ENCODE measurements at regions of chr6 and their contacts with region 1.

Region 1: GRCh38 chr6:87929843-87930288 is 117.8 kb upstream of the SPACA1 start:
- DNase-seq: peak; percentile 81 to 96 (median 89)
- H3K4me3 ChIP-seq: no peak overlapping the region
- H3K27ac ChIP-seq: no peak overlapping the region
- H3K4me1 ChIP-seq: no peaks in the 10 kb centered on the region
- H3K27me3 ChIP-seq: no peaks in the 10 kb centered on the region
- CTCF ChIP-seq: peak; percentile 68 to 97 (median 90)
- POLR2A ChIP-seq: no peak

Region 2: DNA sequence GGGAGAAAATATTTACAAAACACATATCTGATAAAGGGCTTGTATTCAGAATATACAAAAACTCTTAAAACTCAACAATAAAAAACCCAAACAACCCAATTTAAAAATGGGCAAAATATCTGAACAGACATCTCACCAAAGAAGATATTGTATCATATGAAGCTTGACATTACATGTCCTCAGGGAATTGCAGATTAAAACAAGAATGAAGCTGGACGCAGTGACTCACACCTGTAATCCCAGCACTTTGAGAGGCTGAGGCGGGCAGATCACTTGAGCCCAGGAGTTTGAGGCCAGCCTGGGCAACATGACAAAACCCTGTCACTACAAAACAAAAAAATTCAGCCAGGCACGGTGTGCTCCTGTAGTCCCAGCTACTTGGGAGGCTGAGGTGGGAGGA is 92.4 kb before region 1 on chr6:
- intact Hi-C with region 1: loop called in 1 of 2 experiments (anchors 5 kb)
- DNase-seq: no peak
- H3K4me3 ChIP-seq: no peak overlapping the region
- H3K27ac ChIP-seq: no peak overlapping the region
- H3K4me1 ChIP-seq: peaks cover 0 to 4% of the 10 kb centered on the region in 2 donors
- H3K27me3 ChIP-seq: no peaks in the 10 kb centered on the region
- CTCF ChIP-seq: no peak
- POLR2A ChIP-seq: no peak

Region 3: GRCh38 chr6:88492824-88493223 is 563.0 kb after region 1 on chr6:
- intact Hi-C with region 1: loop called (anchors 5 kb)
- DNase-seq: peak in 4 of 7 donors; percentile 17 to 40 (median 24)
- H3K4me3 ChIP-seq: no peak overlapping the region
- H3K27ac ChIP-seq: no peak overlapping the region
- H3K4me1 ChIP-seq: no peaks in the 10 kb centered on the region
- H3K27me3 ChIP-seq: no peaks in the 10 kb centered on the region
- CTCF ChIP-seq: peak; percentile 36 to 78 (median 62)
- POLR2A ChIP-seq: no peak

Region 4: GRCh38 chr6:88780714-88781389 is 851.0 kb after region 1 on chr6:
- intact Hi-C with region 1: loop called in 1 of 2 experiments (anchors 10 kb)
- DNase-seq: peak; percentile 41 to 73 (median 56)
- H3K4me3 ChIP-seq: no peak overlapping the region
- H3K27ac ChIP-seq: no peak overlapping the region
- H3K4me1 ChIP-seq: no peaks in the 10 kb centered on the region
- H3K27me3 ChIP-seq: no peaks in the 10 kb centered on the region
- CTCF ChIP-seq: peak; percentile 64 to 85 (median 75)
- POLR2A ChIP-seq: no peak

Region 5: DNA sequence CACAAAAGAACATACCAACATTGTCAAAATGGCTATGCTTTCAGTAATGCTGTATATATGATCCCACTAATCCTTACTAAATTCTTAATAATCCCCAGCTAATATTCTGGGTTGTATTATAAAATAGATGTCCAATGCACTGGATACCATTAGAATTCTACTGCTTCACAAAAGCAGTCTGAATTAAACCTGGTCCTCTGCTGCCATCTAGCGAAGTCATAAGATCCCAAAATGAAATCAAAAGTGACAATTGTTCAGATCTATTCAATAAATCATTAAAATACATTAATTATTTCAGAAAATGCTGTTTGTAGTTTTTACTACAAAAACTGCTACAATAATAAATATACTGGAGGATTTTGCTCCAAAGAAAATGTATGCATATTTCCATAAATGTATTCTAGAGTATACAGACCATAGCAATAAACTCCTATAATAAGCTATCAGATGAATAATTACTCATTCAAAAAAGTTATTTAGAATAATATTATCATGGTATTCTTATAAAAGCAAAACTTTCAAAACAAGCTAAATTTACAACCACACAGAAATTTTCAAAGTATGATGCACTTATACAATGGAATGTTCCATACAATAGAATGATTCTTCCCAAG is 941.0 kb after region 1 on chr6:
- intact Hi-C with region 1: loop called in 1 of 2 experiments (anchors 5 kb)
- DNase-seq: peak in 6 of 7 donors; percentile 26 to 64 (median 51)
- H3K4me3 ChIP-seq: no peak overlapping the region
- H3K27ac ChIP-seq: no peak overlapping the region
- H3K4me1 ChIP-seq: peaks cover 6 to 23% of the 10 kb centered on the region in 2 donors
- H3K27me3 ChIP-seq: no peaks in the 10 kb centered on the region
- CTCF ChIP-seq: peak; percentile 39 to 80 (median 69)
- POLR2A ChIP-seq: no peak

Measured in adrenal gland (tissue), 19 donors.